ENCODE measurements at regions of chr1 and their contacts with region 1.

Region 1: GRCh38 chr1:206583707-206584648 is 28.3 kb downstream of the EIF2D start:
- DNase-seq: peak; percentile 90
- ATAC-seq: peak; percentile 18
- H3K4me3 Mint-ChIP-seq: peak overlapping the region; percentile 54
- H3K27ac Mint-ChIP-seq: peak overlapping the region; percentile 91
- H3K4me1 Mint-ChIP-seq: peaks cover 92% of the 10 kb centered on the region
- H3K27me3 Mint-ChIP-seq: no peaks in the 10 kb centered on the region

Region 2: GRCh38 chr1:206469933-206470691 is 113.9 kb before region 1 on chr1 and contains the start of gene IKBKE:
- CTCF ChIA-PET with region 1: interaction called, 16 read pairs
- POLR2A ChIA-PET with region 1: interaction called, 3 read pairs
- DNase-seq: peak; percentile 73
- ATAC-seq: peak; percentile 71
- H3K4me3 Mint-ChIP-seq: peak within 1 kb of the TSS; percentile 89
- H3K27ac Mint-ChIP-seq: peak within 1 kb of the TSS; percentile 94
- H3K4me1 Mint-ChIP-seq: peaks cover 88% of the 10 kb centered on the region
- H3K27me3 Mint-ChIP-seq: no peaks in the 10 kb centered on the region
- total RNA-seq, gene IKBKE: 68.3 to 70.1 TPM

Region 3: DNA sequence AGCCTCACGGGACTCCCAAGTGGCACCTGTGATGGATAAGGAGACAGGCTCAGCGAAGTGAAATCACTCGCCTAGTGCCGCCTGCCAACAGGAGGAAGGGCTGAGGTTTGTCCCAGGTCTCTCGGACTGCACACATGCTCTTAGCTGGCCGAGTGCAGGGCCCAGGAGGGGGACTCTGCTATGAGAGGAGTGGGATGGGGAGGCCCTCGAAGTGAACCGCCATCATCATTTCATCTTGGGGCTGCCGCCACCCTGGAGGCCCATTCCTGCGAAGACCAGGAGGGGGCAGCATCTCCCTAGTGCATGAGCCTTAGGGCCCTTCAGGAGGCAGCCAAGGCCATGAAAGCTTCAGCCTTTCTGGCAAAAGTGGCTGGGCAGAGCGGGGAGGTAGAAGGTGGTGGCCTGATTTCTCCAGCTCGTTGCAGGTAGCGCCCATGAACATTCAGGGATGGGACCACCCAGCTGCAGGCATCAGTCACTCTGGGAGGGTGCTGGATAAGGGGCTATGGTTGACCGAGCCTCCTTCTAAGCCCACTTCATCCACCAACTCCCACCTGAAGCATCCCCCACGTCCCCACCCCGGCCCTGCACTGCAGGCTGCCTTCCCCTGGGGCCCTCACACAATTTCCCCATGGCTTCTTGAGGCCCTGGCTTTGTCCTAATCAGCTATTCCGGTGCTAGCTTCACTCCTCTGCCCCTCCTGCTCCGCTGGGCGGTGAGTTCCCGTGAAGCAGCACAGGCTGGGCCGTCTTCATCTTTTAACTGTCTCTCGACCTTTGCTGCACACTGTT is 93.8 kb before region 1 on chr1:
- CTCF ChIA-PET with region 1: interaction called, 30 read pairs
- POLR2A ChIA-PET with region 1: interaction called, 3 read pairs
- DNase-seq: peak; percentile 78
- ATAC-seq: peak; percentile 84
- H3K4me3 Mint-ChIP-seq: no peak overlapping the region
- H3K27ac Mint-ChIP-seq: peak overlapping the region; percentile 68
- H3K4me1 Mint-ChIP-seq: peaks cover 21% of the 10 kb centered on the region
- H3K27me3 Mint-ChIP-seq: no peaks in the 10 kb centered on the region

Region 4: GRCh38 chr1:206556750-206557635 is 27.0 kb before region 1 on chr1:
- CTCF ChIA-PET with region 1: interaction called, 728 read pairs
- POLR2A ChIA-PET with region 1: interaction called, 276 read pairs
- DNase-seq: peak; percentile 95
- ATAC-seq: peak; percentile 71
- H3K4me3 Mint-ChIP-seq: peak overlapping the region; percentile 86
- H3K27ac Mint-ChIP-seq: peak overlapping the region; percentile 82
- H3K4me1 Mint-ChIP-seq: peaks cover 67% of the 10 kb centered on the region
- H3K27me3 Mint-ChIP-seq: no peaks in the 10 kb centered on the region

Region 5: GRCh38 chr1:206612129-206612876 is 28.3 kb after region 1 on chr1 and contains the start of gene EIF2D:
- CTCF ChIA-PET with region 1: interaction called, 11 read pairs
- POLR2A ChIA-PET with region 1: interaction called, 3 read pairs
- DNase-seq: peak; percentile 95
- ATAC-seq: peak; percentile 98
- H3K4me3 Mint-ChIP-seq: peak within 1 kb of the TSS; percentile 94
- H3K27ac Mint-ChIP-seq: peak within 1 kb of the TSS; percentile 90
- H3K4me1 Mint-ChIP-seq: peaks cover 35% of the 10 kb centered on the region
- H3K27me3 Mint-ChIP-seq: peaks cover 10% of the 10 kb centered on the region
- total RNA-seq, gene EIF2D: 41.6 to 45.1 TPM

Region 6: GRCh38 chr1:206716870-206717673 is 133.1 kb after region 1 on chr1:
- CTCF ChIA-PET with region 1: no interaction called
- POLR2A ChIA-PET with region 1: no interaction called
- DNase-seq: peak; percentile 52
- ATAC-seq: peak; percentile 67
- H3K4me3 Mint-ChIP-seq: peak overlapping the region; percentile 26
- H3K27ac Mint-ChIP-seq: peak overlapping the region; percentile 75
- H3K4me1 Mint-ChIP-seq: peaks cover 69% of the 10 kb centered on the region
- H3K27me3 Mint-ChIP-seq: no peaks in the 10 kb centered on the region

Measured in activated CD8-positive, alpha-beta T cell treated with anti-CD3 and anti-CD28 coated beads, Interleukin-2, amount 10 ng/mL, durations not matched to agents 7 days and 5 days (primary cell).